Activated CD4-positive, alpha-beta memory T cell treated with anti-CD3 and anti-CD28 coated beads for 36 hours (primary cell): ENCODE measurements at regions of chr2 and their contacts with region 1.

Region 1: DNA sequence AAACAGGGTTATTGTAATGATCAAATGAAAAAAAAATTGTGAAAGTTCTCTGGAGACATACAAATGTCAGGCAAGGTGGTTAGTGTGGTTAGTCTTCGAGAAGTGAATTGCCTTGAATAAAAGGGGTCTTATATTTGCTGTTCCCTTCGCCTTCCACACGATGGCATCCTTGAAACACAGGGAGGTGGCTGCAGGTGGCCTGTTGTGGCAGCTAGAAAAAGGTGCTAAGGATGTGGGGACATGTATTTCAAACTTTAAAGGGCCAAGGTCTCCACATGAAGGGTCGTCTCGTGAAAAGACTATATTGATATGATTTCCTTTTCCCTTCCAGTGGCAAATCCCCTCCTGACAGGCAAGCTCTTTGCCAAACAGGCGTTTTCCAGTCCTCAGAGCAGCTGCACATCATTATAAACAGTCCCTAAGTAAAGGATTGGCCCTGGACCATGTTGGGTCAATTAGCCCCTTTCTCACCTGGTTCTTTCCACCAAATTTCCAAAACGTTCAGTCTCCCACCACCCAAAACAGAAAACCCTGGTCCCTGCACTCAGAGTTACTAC is 68.5 kb downstream of the COPS8 start:
- DNase-seq: peak; percentile 76
- H3K4me3 Mint-ChIP-seq: no peak overlapping the region
- H3K27ac Mint-ChIP-seq: no peak overlapping the region
- H3K4me1 Mint-ChIP-seq: peaks cover 44% of the 10 kb centered on the region
- H3K27me3 Mint-ChIP-seq: peaks cover 4% of the 10 kb centered on the region

Region 2: GRCh38 chr2:237165405-237166276 is 11.5 kb after region 1 on chr2:
- CTCF ChIA-PET with region 1: interaction called, 10 read pairs
- POLR2A ChIA-PET with region 1: no interaction called
- intact Hi-C with region 1: no loop called
- DNase-seq: no peak
- H3K4me3 Mint-ChIP-seq: no peak overlapping the region
- H3K27ac Mint-ChIP-seq: no peak overlapping the region
- H3K4me1 Mint-ChIP-seq: no peaks in the 10 kb centered on the region
- H3K27me3 Mint-ChIP-seq: peaks cover 5% of the 10 kb centered on the region

Region 3: GRCh38 chr2:237291138-237291792 is 137.1 kb after region 1 on chr2:
- CTCF ChIA-PET with region 1: no interaction called
- POLR2A ChIA-PET with region 1: no interaction called
- intact Hi-C with region 1: loop called (anchors 10 kb)
- DNase-seq: peak; percentile 60
- H3K4me3 Mint-ChIP-seq: peak overlapping the region; percentile 49
- H3K27ac Mint-ChIP-seq: no peak overlapping the region
- H3K4me1 Mint-ChIP-seq: peaks cover 9% of the 10 kb centered on the region
- H3K27me3 Mint-ChIP-seq: peaks cover 41% of the 10 kb centered on the region

Region 4: DNA sequence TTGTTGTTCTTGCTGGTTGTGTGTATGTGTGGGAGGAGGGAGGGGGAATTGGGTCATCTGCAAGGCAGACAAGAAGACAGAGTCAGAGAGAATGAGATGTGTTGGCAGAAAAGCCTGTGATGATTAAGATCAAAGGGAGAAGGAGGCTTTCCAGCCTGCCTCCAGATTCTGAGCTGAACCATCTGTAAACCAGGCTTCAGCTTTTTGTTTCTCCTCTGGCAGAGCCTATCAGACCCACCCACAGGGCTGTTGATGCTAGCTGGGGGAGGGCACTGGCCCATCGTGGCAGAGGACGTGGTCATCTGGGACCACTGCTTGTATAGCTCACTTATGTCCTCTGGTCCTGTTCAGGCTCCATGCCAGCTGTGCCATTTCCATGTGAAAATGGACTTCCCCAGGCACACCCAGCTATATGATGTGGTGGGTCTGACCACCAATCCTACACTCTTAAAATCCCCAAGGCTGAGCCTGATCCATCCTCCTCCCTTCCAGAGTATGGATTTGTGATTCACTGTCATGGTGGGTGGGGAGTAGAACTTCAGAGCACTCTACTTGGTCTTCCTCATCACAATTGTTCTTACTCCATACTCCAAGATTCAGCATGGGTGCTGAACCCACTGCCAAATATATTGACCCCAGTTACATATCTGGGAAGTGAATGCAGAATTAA is 287.6 kb after region 1 on chr2:
- CTCF ChIA-PET with region 1: no interaction called
- POLR2A ChIA-PET with region 1: interaction called, 3 read pairs
- intact Hi-C with region 1: loop called (anchors 1 kb)
- DNase-seq: peak; percentile 69
- H3K4me3 Mint-ChIP-seq: peak overlapping the region; percentile 40
- H3K27ac Mint-ChIP-seq: peak overlapping the region; percentile 98
- H3K4me1 Mint-ChIP-seq: peaks cover 73% of the 10 kb centered on the region
- H3K27me3 Mint-ChIP-seq: peaks cover 2% of the 10 kb centered on the region

Region 5: DNA sequence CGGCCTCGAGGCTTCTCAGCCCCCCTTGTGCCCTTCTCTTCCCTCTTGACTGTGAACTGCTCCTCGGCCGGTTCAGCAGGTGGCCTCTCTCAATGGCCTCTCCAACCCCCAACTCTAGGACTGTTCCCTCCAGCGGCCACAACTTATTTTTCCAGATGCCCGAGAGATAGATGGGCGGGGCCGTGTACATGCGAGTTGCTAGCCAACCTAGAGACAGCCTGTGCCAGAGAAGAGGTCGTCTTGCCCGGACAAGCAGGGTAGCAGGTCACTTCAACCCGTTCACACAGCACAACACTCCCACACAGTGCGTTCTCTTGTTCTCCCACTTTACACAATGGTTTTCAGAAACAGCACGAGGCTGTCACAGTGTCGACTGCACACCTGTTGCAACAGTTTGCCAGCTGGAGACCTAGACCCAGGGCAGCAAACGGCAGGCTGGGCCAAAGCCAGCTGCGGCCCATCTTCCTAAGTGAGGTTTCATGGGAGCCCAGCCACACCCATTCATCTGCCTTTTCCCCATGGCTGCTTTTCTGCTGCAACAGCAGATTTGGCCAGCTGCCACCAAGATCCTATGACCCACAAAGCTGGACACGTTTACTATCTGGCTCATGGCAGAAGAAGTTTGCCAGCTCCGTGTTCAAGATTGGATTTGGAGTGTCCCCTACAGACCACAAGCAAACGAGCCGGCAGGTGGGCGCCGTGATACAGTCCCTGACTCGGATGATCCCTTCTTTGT is 404.9 kb after region 1 on chr2:
- CTCF ChIA-PET with region 1: no interaction called
- POLR2A ChIA-PET with region 1: no interaction called
- intact Hi-C with region 1: loop called (anchors 5 kb)
- DNase-seq: no peak
- H3K4me3 Mint-ChIP-seq: no peak overlapping the region
- H3K27ac Mint-ChIP-seq: no peak overlapping the region
- H3K4me1 Mint-ChIP-seq: peaks cover 13% of the 10 kb centered on the region
- H3K27me3 Mint-ChIP-seq: peaks cover 16% of the 10 kb centered on the region